Caco-2 (cell line): ENCODE measurements at regions of chr5 and their contacts with region 1.

Region 1: DNA sequence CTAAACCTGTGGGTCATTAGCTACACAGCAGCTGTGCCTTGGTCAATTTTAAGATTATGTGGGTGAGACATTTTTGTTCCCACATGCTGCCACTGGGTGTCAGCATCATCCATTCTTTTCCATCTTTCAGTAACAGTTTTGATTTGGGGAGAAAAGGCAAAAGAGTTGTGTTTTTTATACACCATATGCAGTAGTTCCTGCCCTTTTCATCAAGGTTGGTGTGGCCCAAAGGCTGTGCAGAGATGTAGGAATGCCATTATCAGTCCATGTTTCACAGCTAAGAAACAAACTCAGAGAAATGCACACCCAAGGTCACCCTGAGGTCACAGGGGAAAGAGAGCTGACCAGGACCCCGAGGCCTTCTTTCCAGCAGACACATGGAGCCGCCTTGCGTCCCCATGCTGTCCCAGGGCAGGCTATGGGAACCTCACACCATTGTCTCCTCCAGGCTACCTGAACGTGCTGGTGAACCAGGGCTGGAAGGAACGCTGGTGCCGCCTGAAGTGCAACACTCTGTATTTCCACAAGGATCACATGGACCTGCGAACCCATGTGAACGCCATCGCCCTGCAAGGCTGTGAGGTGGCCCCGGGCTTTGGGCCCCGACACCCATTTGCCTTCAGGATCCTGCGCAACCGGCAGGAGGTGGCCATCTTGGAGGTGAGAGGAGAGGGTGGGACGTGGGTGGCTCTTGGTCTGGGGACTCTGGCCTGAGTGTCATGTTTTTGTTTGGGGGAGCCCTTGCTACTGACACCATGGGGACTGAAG is 27.8 kb upstream of the GRPEL2 start:
- DNase-seq: peak in 1 of 2 experiments; percentile 50
- H3K4me3 ChIP-seq: no peak overlapping the region
- H3K4me3 Mint-ChIP-seq: no peak overlapping the region
- H3K27ac Mint-ChIP-seq: no peak overlapping the region
- H3K4me1 ChIP-seq: peaks cover 16% of the 10 kb centered on the region
- H3K4me1 Mint-ChIP-seq: peaks cover 11% of the 10 kb centered on the region
- H3K27me3 ChIP-seq: no peaks in the 10 kb centered on the region
- H3K27me3 Mint-ChIP-seq: peaks cover 7% of the 10 kb centered on the region
- CTCF ChIP-seq: peak; percentile 75 to 82

Region 2: GRCh38 chr5:149367249-149367971 is 49.9 kb after region 1 on chr5:
- CTCF ChIA-PET with region 1: interaction called, 25 read pairs
- POLR2A ChIA-PET with region 1: no interaction called
- intact Hi-C with region 1: loop called (anchors 1 kb)
- DNase-seq: peak; percentile 87 to 88
- H3K4me3 ChIP-seq: no peak overlapping the region
- H3K4me3 Mint-ChIP-seq: no peak overlapping the region
- H3K27ac Mint-ChIP-seq: no peak overlapping the region
- H3K4me1 ChIP-seq: peaks cover 4% of the 10 kb centered on the region; the same call in 1 of the 2 replicates
- H3K4me1 Mint-ChIP-seq: no peaks in the 10 kb centered on the region
- H3K27me3 ChIP-seq: no peaks in the 10 kb centered on the region
- H3K27me3 Mint-ChIP-seq: no peaks in the 10 kb centered on the region
- CTCF ChIP-seq: peak; percentile 86 to 91

Region 3: DNA sequence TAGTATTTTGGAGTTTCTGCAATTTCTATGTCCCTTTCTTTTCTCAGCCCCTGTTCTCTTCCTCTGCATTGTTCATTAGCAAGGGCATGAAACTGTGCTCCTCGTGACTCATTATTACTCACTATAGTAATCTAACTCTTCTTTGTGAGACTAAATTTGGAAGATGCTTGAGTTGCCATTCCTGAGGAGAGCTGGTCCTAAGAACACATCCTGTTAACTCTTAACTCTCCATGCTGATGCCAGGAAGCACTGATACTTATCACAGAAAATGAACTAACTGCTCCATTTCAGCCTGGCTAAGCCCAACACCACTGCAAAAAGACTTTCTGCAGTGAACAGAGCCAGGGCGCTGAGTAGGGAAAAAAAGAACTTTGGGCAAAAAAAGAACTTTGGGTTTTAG is 244.4 kb after region 1 on chr5:
- CTCF ChIA-PET with region 1: no interaction called
- POLR2A ChIA-PET with region 1: no interaction called
- intact Hi-C with region 1: loop called (anchors 1 kb)
- DNase-seq: no peak
- H3K4me3 ChIP-seq: no peak overlapping the region
- H3K4me3 Mint-ChIP-seq: no peak overlapping the region
- H3K27ac Mint-ChIP-seq: peak overlapping the region; percentile 26
- H3K4me1 ChIP-seq: peaks cover 33% of the 10 kb centered on the region
- H3K4me1 Mint-ChIP-seq: peaks cover 18% of the 10 kb centered on the region
- H3K27me3 ChIP-seq: no peaks in the 10 kb centered on the region
- H3K27me3 Mint-ChIP-seq: no peaks in the 10 kb centered on the region
- CTCF ChIP-seq: no peak